ENCODE measurements at regions of chr11 and their contacts with region 1.

Region 1: DNA sequence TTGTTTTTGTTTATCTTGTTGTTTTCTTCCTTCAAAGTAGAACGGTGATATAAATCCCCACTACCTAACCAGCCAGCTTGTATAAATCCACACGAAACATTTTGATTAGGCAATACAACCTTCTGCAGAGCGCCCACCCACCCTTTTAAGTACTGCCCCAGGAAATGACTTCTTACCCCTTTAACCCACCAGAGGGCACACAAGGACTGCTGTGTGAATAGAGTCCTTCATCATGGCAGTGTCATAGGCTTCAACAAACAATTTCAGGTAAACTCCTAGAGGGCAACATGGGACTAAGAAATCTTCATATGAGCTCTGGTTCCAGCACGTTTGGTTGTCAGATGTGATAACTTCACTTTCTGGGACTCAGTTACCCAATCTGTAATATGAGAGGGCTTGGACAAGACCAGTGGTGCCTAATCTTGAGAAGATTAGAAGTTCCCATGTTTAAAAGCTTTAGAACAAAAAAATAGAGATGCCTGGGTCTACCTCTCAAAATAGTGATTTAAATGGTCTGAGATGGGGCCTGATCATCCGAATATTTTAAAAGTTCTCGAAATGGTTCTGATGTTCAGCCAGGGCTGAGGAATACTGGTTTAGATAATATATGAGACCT is 56.1 kb downstream of the PIWIL4 start:
- DNase-seq: peak in 4 of 5 donors; percentile 40 to 46 (median 44)
- ATAC-seq: peak; percentile 80 to 98 (median 95)
- H3K4me3 ChIP-seq: no peak overlapping the region
- H3K27ac ChIP-seq: no peak overlapping the region
- H3K4me1 ChIP-seq: peaks cover 0 to 5% (median 0%) of the 10 kb centered on the region in 12 donors
- H3K27me3 ChIP-seq: no peaks in the 10 kb centered on the region
- CTCF ChIP-seq: peak; percentile 56 to 94 (median 84)
- POLR2A ChIP-seq: no peak

Region 2: GRCh38 chr11:94731880-94732601 is 108.8 kb after region 1 on chr11:
- intact Hi-C with region 1: loop called in 1 of 10 experiments (anchors 10 kb)
- DNase-seq: peak in 3 of 5 donors; percentile 26 to 48 (median 42)
- ATAC-seq: peak; percentile 57 to 90 (median 84)
- H3K4me3 ChIP-seq: no peak overlapping the region
- H3K27ac ChIP-seq: peak overlapping the region; percentile 46 to 86 (median 80)
- H3K4me1 ChIP-seq: peaks cover 0 to 39% (median 28%) of the 10 kb centered on the region in 12 donors
- H3K27me3 ChIP-seq: no peaks in the 10 kb centered on the region
- CTCF ChIP-seq: no peak
- POLR2A ChIP-seq: no peak

Region 3: GRCh38 chr11:94767761-94768601 is 144.8 kb after region 1 on chr11 and contains the start of gene AMOTL1:
- intact Hi-C with region 1: loop called in 8 of 10 experiments (anchors 2 to 10 kb)
- DNase-seq: peak; percentile 91 to 94 (median 93)
- ATAC-seq: peak; percentile 89 to 97 (median 94)
- H3K4me3 ChIP-seq: peak within 1 kb of the TSS; percentile 77 to 97 (median 85)
- H3K27ac ChIP-seq: peak within 1 kb of the TSS; percentile 76 to 99 (median 96)
- H3K4me1 ChIP-seq: peaks cover 2 to 37% (median 19%) of the 10 kb centered on the region in 12 donors
- H3K27me3 ChIP-seq: no peaks in the 10 kb centered on the region
- CTCF ChIP-seq: peak in 4 of 12 donors; percentile 7 to 37 (median 24)
- POLR2A ChIP-seq: peak; percentile 17 to 78
- total RNA-seq, gene AMOTL1: 24.4 to 76.0 (median 51.7) TPM

Region 4: DNA sequence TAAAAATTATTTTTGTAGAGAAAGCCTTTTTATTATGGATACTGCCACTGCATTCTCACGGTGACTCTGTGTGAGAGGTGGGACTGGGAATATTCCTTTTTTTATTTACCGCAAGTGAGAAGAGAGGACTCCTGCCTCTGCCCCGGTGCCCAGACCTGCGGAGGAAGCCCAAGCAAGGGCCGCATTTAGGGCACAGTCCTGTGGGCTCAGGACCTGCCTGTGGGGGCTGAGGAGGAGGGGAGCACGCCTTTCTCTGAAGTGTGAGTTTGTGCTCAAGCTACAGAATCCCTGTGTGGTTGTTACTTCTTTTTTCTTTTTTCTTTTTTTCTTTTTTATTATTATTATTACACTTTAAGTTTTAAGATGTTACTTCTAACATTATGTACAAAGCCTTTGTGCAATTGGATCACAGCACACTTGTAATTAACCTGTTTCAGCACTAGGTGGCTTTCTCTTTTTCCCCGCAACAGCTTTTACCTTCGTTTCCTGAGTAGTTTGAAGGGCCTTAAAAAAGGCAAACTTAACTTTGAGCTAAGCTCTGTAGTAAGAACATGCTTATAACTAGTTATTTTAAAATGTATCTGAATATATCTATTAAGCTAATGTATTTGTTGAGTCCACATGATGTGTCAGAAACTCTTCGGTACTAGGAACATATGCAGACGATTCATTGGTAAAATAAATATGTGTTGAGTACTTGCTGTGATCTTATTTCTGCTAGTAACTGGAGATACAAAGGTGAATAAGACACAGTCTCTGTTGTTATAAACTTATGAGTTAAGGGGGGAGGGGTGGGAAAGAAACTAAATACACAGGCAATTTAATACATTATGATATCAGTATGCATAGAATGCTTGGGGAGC is 163.3 kb after region 1 on chr11:
- intact Hi-C with region 1: no loop called
- DNase-seq: no peak
- ATAC-seq: no peak
- H3K4me3 ChIP-seq: no peak overlapping the region
- H3K27ac ChIP-seq: no peak overlapping the region
- H3K4me1 ChIP-seq: peaks cover 2 to 93% (median 55%) of the 10 kb centered on the region in 12 donors
- H3K27me3 ChIP-seq: no peaks in the 10 kb centered on the region
- CTCF ChIP-seq: peak; percentile 45 to 72 (median 59)
- POLR2A ChIP-seq: no peak

Region 5: GRCh38 chr11:94897330-94897768 is 274.1 kb after region 1 on chr11:
- intact Hi-C with region 1: loop called (anchors 1 to 5 kb)
- DNase-seq: peak in 3 of 5 donors; percentile 35 to 51 (median 51)
- ATAC-seq: peak in 3 of 4 donors; percentile 32 to 64 (median 58)
- H3K4me3 ChIP-seq: no peak overlapping the region
- H3K27ac ChIP-seq: no peak overlapping the region
- H3K4me1 ChIP-seq: peaks cover 0 to 5% (median 0%) of the 10 kb centered on the region in 12 donors
- H3K27me3 ChIP-seq: no peaks in the 10 kb centered on the region
- CTCF ChIP-seq: peak; percentile 82 to 95 (median 90)
- POLR2A ChIP-seq: no peak

Region 6: DNA sequence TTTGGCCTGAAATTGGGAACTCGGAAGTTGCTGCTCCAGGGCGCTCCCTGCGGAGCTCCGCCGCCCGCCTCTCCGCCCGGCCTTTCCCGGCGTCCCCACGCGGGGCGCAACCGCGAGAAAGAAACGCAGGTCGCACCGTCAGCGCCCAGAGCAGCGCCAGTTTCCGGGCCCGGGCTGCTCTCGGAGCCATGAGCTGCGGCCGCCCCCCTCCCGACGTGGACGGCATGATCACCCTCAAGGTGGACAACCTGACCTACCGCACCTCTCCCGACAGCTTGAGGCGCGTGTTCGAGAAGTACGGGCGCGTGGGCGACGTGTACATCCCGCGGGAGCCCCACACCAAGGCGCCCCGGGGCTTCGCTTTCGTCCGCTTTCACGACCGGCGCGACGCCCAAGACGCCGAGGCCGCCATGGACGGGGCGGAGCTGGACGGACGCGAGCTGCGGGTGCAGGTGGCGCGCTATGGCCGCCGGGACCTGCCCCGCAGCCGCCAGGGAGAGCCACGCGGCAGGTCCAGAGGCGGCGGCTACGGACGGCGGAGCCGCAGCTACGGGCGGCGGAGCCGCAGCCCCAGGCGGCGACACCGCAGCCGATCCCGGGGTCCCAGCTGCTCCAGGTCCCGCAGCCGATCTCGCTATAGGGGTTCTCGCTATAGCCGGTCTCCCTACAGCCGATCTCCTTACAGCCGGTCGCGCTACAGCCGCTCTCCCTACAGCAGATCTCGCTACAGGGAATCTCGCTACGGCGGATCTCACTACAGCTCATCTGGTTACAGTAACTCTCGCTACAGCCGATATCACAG is 444.0 kb after region 1 on chr11:
- intact Hi-C with region 1: loop called in 1 of 10 experiments (anchors 10 kb)
- DNase-seq: peak; percentile 85 to 93 (median 89)
- ATAC-seq: peak; percentile 65 to 91 (median 86)
- H3K4me3 ChIP-seq: peak overlapping the region; percentile 62 to 92 (median 78)
- H3K27ac ChIP-seq: peak overlapping the region; percentile 93 to 99 (median 96)
- H3K4me1 ChIP-seq: peaks cover 3 to 24% (median 13%) of the 10 kb centered on the region in 12 donors
- H3K27me3 ChIP-seq: no peaks in the 10 kb centered on the region
- CTCF ChIP-seq: peak; percentile 35 to 83 (median 62)
- POLR2A ChIP-seq: peak in 1 of 2 donors; percentile 49